A673 (cell line): ENCODE measurements at regions of chr16 and their contacts with region 1.

Region 1: DNA sequence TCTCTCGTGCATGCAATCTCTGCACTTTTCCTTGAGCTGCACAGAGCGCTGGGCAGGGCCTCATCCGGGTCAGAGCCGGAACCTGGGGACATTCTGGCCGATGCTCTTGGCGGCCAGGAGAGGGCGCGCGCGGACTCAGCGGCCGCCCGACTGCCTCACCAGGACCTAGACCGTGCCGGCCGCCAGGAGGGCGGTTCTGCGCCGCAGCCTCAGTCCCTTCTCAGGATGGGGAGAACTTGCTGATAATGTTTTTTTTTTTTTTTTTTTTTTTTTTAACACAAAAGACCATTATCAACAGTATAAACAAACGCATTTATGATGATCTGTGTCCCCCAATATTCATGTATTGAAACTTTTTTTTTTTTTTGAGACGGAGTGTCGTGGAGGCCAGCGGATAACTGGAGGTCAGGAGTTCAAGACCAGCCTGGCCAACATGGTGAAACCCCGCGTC is 8.1 kb upstream of the FLYWCH2 start:
- DNase-seq: peak; percentile 83
- H3K4me3 ChIP-seq: no peak overlapping the region
- H3K27ac ChIP-seq: no peak overlapping the region
- H3K4me1 ChIP-seq: no peaks in the 10 kb centered on the region
- H3K27me3 ChIP-seq: no peaks in the 10 kb centered on the region
- CTCF ChIP-seq: peak; percentile 95

Region 2: GRCh38 chr16:2919511-2920255 is 44.7 kb after region 1 on chr16:
- CTCF ChIA-PET with region 1: no interaction called
- POLR2A ChIA-PET with region 1: no interaction called
- intact Hi-C with region 1: loop called (anchors 2 kb)
- DNase-seq: peak; percentile 81
- H3K4me3 ChIP-seq: no peak overlapping the region
- H3K27ac ChIP-seq: no peak overlapping the region
- H3K4me1 ChIP-seq: peaks cover 22% of the 10 kb centered on the region
- H3K27me3 ChIP-seq: no peaks in the 10 kb centered on the region
- CTCF ChIP-seq: peak; percentile 90